Natural killer cell (primary cell): ENCODE measurements at regions of chr6 and their contacts with region 1.

Region 1: GRCh38 chr6:145814501-145815308 is at the start of gene FBXO30:
- DNase-seq: peak; percentile 87 to 94
- ATAC-seq: peak; percentile 89 to 99 (median 93)
- H3K4me3 ChIP-seq: peak within 1 kb of the TSS; percentile 99
- H3K4me3 Mint-ChIP-seq: peak within 1 kb of the TSS; percentile 92
- H3K27ac ChIP-seq: peak within 1 kb of the TSS; percentile 85
- H3K27ac Mint-ChIP-seq: peak within 1 kb of the TSS; percentile 87 to 93
- H3K4me1 ChIP-seq: peaks cover 18% of the 10 kb centered on the region
- H3K4me1 Mint-ChIP-seq: peaks cover 29 to 46% of the 10 kb centered on the region in 2 donors
- H3K27me3 ChIP-seq: no peaks in the 10 kb centered on the region
- H3K27me3 Mint-ChIP-seq: no peaks in the 10 kb centered on the region
- CTCF ChIP-seq: no peak
- total RNA-seq, gene FBXO30: 3.4 to 6.4 (median 5.9) TPM

Region 2: GRCh38 chr6:145866456-145867396 is 52.0 kb after region 1 on chr6:
- intact Hi-C with region 1: loop called (anchors 5 kb)
- DNase-seq: peak in 1 of 2 donors; percentile 41
- ATAC-seq: peak; percentile 31 to 57 (median 52)
- H3K4me3 ChIP-seq: no peak overlapping the region
- H3K4me3 Mint-ChIP-seq: peak overlapping the region; percentile 70
- H3K27ac ChIP-seq: peak overlapping the region; percentile 50
- H3K27ac Mint-ChIP-seq: peak overlapping the region; percentile 84 to 86
- H3K4me1 ChIP-seq: peaks cover 12% of the 10 kb centered on the region
- H3K4me1 Mint-ChIP-seq: peaks cover 37 to 42% of the 10 kb centered on the region in 2 donors
- H3K27me3 ChIP-seq: no peaks in the 10 kb centered on the region
- H3K27me3 Mint-ChIP-seq: no peaks in the 10 kb centered on the region
- CTCF ChIP-seq: no peak

Region 3: DNA sequence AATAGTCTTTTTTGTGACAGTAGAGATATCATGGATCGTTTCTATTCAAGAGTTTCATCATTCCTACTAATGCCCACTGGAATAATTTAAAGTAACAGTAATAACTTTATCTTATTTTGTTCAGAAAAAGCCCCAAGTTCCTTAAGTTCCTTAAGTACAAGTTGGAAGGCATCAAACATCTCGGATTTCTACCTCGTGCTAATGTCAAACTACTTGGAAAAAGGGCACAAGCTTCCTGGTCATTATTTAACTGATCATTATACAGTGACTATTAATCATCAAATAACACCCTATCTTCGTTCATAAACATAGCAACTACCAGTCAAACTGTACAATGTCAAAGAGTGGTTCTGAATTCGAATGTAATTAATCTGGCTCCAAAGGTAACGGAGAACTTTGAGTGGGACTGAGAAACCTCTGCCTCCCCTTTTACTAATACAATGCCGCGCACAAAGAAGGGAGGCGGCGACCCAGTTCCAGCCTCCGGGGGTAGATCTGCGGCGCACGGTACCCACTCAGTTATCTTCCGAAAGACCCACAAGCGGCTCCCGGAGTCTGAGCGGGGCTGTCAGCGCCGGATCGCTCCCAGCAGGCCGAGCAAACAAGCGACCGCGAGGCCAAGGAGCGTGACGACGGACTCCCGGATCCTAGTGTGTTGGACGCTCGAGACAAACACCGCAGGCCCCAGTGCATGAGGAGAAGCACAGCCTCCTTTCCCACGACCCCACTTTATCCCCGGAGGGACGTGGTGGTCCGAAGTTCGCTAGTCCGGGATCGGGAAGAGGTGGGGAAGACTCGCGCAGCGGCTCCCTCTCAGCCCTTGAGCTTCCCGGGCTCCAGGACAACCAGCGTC is 148.7 kb after region 1 on chr6:
- intact Hi-C with region 1: loop called (anchors 1 kb)
- DNase-seq: peak; percentile 38 to 62
- ATAC-seq: peak in 1 of 3 donors; percentile 8
- H3K4me3 ChIP-seq: peak overlapping the region; percentile 90
- H3K4me3 Mint-ChIP-seq: peak overlapping the region; percentile 97
- H3K27ac ChIP-seq: peak overlapping the region; percentile 82
- H3K27ac Mint-ChIP-seq: peak overlapping the region; percentile 93 to 95
- H3K4me1 ChIP-seq: peaks cover 6% of the 10 kb centered on the region
- H3K4me1 Mint-ChIP-seq: peaks cover 26 to 30% of the 10 kb centered on the region in 2 donors
- H3K27me3 ChIP-seq: no peaks in the 10 kb centered on the region
- H3K27me3 Mint-ChIP-seq: peaks cover 0 to 2% of the 10 kb centered on the region in 2 donors
- CTCF ChIP-seq: no peak